ENCODE measurements at regions of chr1 and their contacts with region 1.

Region 1: GRCh38 chr1:170074250-170075157 is at the start of gene KIFAP3:
- DNase-seq: peak; percentile 99
- ATAC-seq: peak; percentile 100
- total RNA-seq, gene KIFAP3: 41.4 to 58.6 TPM

Region 2: GRCh38 chr1:170010443-170010842 is 64.1 kb before region 1 on chr1:
- intact Hi-C with region 1: loop called in 1 of 2 experiments (anchors 5 kb)
- DNase-seq: peak; percentile 25
- ATAC-seq: no peak

Region 3: GRCh38 chr1:170145770-170146676 is 71.5 kb after region 1 on chr1 and contains the start of gene NTMT2:
- intact Hi-C with region 1: loop called in 1 of 2 experiments (anchors 5 kb)
- DNase-seq: peak; percentile 53
- ATAC-seq: peak; percentile 96 to 98
- total RNA-seq, gene NTMT2: 0.73 to 3.5 TPM

Region 4: DNA sequence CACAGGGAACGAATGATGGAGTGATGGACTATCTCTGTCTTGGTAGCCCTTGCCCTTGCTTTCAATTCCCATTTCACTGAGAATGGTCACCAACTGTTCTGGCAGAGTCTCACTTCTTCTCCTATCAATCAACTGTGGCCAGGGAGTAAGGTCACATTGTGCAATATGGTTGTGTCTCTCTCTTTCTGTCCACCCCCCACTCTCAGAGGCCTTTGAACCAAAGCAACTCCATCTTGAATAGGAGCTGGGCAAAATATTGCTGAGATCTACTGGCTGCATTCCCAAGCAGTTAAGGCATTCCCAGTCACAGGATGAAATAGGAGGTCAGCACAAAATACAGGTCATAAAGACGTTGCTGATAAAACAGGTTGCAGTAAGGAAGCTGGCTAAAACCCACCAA is 107.9 kb after region 1 on chr1:
- intact Hi-C with region 1: no loop called
- DNase-seq: no peak
- ATAC-seq: no peak

Region 5: GRCh38 chr1:170537798-170538503 is 463.4 kb after region 1 on chr1:
- intact Hi-C with region 1: loop called in 1 of 2 experiments (anchors 2 kb)
- DNase-seq: no peak
- ATAC-seq: peak; percentile 53 to 65